Activated naive CD8-positive, alpha-beta T cell treated with anti-CD3 and anti-CD28 coated beads, Interleukin-2, amount 10 ng/mL, durations not matched to agents 7 days and 5 days (primary cell): ENCODE measurements at regions of chr11 and their contacts with region 1.

Region 1: DNA sequence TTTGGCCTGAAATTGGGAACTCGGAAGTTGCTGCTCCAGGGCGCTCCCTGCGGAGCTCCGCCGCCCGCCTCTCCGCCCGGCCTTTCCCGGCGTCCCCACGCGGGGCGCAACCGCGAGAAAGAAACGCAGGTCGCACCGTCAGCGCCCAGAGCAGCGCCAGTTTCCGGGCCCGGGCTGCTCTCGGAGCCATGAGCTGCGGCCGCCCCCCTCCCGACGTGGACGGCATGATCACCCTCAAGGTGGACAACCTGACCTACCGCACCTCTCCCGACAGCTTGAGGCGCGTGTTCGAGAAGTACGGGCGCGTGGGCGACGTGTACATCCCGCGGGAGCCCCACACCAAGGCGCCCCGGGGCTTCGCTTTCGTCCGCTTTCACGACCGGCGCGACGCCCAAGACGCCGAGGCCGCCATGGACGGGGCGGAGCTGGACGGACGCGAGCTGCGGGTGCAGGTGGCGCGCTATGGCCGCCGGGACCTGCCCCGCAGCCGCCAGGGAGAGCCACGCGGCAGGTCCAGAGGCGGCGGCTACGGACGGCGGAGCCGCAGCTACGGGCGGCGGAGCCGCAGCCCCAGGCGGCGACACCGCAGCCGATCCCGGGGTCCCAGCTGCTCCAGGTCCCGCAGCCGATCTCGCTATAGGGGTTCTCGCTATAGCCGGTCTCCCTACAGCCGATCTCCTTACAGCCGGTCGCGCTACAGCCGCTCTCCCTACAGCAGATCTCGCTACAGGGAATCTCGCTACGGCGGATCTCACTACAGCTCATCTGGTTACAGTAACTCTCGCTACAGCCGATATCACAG is 521 bp downstream of the SRSF8 start:
- DNase-seq: peak; percentile 82
- ATAC-seq: peak; percentile 71
- H3K4me3 Mint-ChIP-seq: peak overlapping the region; percentile 88
- H3K27ac Mint-ChIP-seq: peak overlapping the region; percentile 92
- H3K4me1 Mint-ChIP-seq: peaks cover 15% of the 10 kb centered on the region
- H3K27me3 Mint-ChIP-seq: peaks cover 7% of the 10 kb centered on the region

Region 2: DNA sequence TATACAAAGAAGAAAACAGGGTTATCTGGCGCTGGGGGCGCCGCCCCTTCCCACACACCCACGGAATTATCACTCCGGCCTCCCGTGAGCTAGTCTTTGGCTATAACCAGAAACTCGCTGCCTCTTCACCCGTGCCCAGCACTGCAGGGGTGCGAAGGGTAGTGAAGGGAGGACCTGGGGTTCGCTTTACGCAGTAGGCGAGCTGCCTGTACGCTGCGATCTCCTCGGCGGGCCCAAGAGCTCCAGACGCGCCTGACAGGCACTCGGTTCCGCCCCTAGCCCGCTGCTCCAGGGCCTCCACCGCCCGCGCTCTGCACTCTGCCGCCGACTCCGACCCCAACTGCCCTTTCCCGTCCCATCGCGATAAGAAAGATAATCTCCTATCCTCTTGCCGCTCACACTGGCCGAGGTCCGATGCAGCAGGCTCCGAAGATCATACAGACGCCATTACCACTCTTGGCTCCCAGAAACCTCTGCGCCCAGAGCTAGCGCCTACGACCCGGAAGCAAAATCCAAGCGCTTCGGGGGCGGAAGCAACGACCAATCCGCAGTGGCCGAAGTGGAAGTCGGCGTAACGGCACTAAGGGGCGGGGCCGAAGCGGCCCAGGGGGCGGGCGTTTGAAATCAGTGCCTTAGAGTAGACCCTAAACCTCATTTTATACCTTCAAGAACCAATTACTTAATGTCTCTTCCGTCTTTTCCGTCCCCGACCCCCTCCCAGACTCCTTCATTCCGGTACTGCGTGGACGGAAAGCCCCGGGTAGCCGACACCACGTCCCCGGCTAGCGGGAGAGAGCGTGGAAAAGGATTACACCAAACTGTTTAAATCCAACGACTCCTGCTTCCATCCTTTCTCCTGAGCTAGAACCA is 93.9 kb before region 1 on chr11 and contains the starts of genes CWC15 and KDM4D:
- POLR2A ChIA-PET with region 1: interaction called, 27 read pairs
- DNase-seq: peak; percentile 92
- ATAC-seq: peak; percentile 99
- H3K4me3 Mint-ChIP-seq: peak within 1 kb of the TSS; percentile 100
- H3K27ac Mint-ChIP-seq: peak within 1 kb of the TSS; percentile 100
- H3K4me1 Mint-ChIP-seq: peaks cover 30% of the 10 kb centered on the region
- H3K27me3 Mint-ChIP-seq: no peaks in the 10 kb centered on the region
- total RNA-seq, gene CWC15: 80.7 to 83.0 TPM
- total RNA-seq, gene KDM4D: 1.3 to 1.7 TPM

Region 3: DNA sequence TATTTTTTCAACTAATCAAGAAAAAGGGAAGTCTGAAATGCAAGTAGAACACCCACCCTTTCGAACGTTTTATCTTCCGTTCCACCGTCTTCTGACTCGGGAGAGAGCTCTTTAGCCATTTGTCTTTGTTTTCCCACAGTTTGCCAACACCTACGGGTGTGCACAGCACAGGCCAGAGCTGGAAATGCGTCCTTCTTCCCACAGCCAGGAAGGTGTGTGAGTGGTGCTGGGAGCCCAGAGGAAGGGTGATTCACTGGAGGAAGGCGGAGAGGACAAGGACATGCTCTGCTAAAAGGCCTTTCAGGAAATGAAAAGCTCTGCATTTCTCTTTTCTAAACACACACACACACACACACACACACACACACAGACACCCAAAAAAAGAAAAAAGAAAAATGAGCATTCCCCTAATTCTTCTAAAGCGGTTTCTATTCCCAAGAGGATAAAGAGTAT is 40.9 kb after region 1 on chr11:
- POLR2A ChIA-PET with region 1: no interaction called
- DNase-seq: no peak
- ATAC-seq: no peak
- H3K4me3 Mint-ChIP-seq: no peak overlapping the region
- H3K27ac Mint-ChIP-seq: no peak overlapping the region
- H3K4me1 Mint-ChIP-seq: peaks cover 8% of the 10 kb centered on the region
- H3K27me3 Mint-ChIP-seq: no peaks in the 10 kb centered on the region

Region 4: DNA sequence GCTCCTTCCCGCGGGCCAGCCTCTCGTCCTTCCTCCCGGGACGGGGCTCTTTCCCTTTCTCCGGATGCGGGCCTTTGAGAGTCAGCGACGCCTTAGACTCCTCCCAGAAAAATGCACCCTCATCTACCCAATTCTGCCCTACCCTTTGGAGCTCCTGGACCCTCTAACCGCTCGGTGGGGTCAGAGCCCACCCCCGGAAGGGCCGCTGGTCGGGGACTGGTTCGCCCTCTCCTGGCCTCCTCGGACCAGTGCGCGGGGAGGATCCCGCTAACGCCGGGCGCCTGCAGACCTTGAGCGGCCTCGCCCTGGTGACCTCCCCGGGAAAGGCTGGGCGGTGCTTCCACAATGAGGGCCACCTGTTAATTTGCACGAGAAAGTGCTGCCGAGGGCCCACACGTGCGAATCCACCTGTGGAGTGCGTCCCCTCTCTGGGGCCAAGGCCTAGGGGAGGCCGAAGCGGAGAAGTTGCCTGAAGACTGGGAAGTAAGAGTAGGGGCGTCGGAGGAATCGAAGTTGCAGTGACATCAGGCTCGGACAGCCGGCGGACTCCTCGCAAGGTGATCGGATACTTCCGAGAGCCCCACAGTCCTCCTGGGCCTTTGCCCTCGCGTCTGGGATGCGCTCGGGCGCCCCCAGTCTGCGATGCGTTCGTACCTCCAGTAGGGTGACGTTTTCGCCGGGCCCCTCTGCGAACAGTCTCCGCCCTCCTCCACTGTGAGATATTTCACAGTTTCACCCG is 83.9 kb after region 1 on chr11:
- POLR2A ChIA-PET with region 1: interaction called, 50 read pairs
- DNase-seq: peak; percentile 88
- ATAC-seq: peak; percentile 93
- H3K4me3 Mint-ChIP-seq: peak overlapping the region; percentile 89
- H3K27ac Mint-ChIP-seq: peak overlapping the region; percentile 89
- H3K4me1 Mint-ChIP-seq: peaks cover 34% of the 10 kb centered on the region
- H3K27me3 Mint-ChIP-seq: peaks cover 6% of the 10 kb centered on the region